Mammary epithelial cell (primary cell): ENCODE measurements at regions of chr11 and their contacts with region 1.

Region 1: GRCh38 chr11:133927690-133928627 is 28.8 kb downstream of the IGSF9B start:
- DNase-seq: peak; percentile 56
- H3K4me3 ChIP-seq: peak overlapping the region in 1 of 3 experiments; percentile 8
- H3K27ac ChIP-seq: no peak overlapping the region
- H3K4me1 ChIP-seq: peaks cover 14% of the 10 kb centered on the region
- H3K27me3 ChIP-seq: no peaks in the 10 kb centered on the region
- CTCF ChIP-seq: peak; percentile 95 to 98

Region 2: GRCh38 chr11:134033696-134034491 is 105.9 kb after region 1 on chr11:
- CTCF ChIA-PET with region 1: interaction called, 5 read pairs
- dilution Hi-C with region 1: no loop called
- in situ Hi-C with region 1: loop called in 1 of 2 experiments (anchors 25 kb)
- intact Hi-C with region 1: loop called (anchors 5 kb)
- DNase-seq: peak; percentile 66
- H3K4me3 ChIP-seq: no peak overlapping the region
- H3K27ac ChIP-seq: no peak overlapping the region
- H3K4me1 ChIP-seq: peaks cover 39% of the 10 kb centered on the region
- H3K27me3 ChIP-seq: no peaks in the 10 kb centered on the region
- CTCF ChIP-seq: no peak

Region 3: GRCh38 chr11:134098566-134099184 is 170.7 kb after region 1 on chr11:
- CTCF ChIA-PET with region 1: no interaction called
- dilution Hi-C with region 1: no loop called
- in situ Hi-C with region 1: no loop called
- intact Hi-C with region 1: loop called (anchors 1 kb)
- DNase-seq: peak; percentile 11
- H3K4me3 ChIP-seq: no peak overlapping the region
- H3K27ac ChIP-seq: no peak overlapping the region
- H3K4me1 ChIP-seq: no peaks in the 10 kb centered on the region
- H3K27me3 ChIP-seq: no peaks in the 10 kb centered on the region
- CTCF ChIP-seq: peak in 1 of 2 donors; percentile 57

Region 4: GRCh38 chr11:134139873-134140331 is 211.9 kb after region 1 on chr11:
- CTCF ChIA-PET with region 1: no interaction called
- dilution Hi-C with region 1: no loop called
- in situ Hi-C with region 1: loop called in 1 of 2 experiments (anchors 10 kb)
- intact Hi-C with region 1: loop called (anchors 1 kb)
- DNase-seq: peak; percentile 58
- H3K4me3 ChIP-seq: no peak overlapping the region
- H3K27ac ChIP-seq: no peak overlapping the region
- H3K4me1 ChIP-seq: no peaks in the 10 kb centered on the region
- H3K27me3 ChIP-seq: no peaks in the 10 kb centered on the region
- CTCF ChIP-seq: peak; percentile 90 to 97

Region 5: GRCh38 chr11:134244655-134245054 is 316.7 kb after region 1 on chr11:
- CTCF ChIA-PET with region 1: no interaction called
- dilution Hi-C with region 1: no loop called
- in situ Hi-C with region 1: no loop called
- intact Hi-C with region 1: loop called (anchors 10 kb)
- DNase-seq: no peak
- H3K4me3 ChIP-seq: no peak overlapping the region
- H3K27ac ChIP-seq: no peak overlapping the region
- H3K4me1 ChIP-seq: no peaks in the 10 kb centered on the region
- H3K27me3 ChIP-seq: no peaks in the 10 kb centered on the region
- CTCF ChIP-seq: peak; percentile 52 to 58